ENCODE measurements at regions of chrX and their contacts with region 1.

Region 1: DNA sequence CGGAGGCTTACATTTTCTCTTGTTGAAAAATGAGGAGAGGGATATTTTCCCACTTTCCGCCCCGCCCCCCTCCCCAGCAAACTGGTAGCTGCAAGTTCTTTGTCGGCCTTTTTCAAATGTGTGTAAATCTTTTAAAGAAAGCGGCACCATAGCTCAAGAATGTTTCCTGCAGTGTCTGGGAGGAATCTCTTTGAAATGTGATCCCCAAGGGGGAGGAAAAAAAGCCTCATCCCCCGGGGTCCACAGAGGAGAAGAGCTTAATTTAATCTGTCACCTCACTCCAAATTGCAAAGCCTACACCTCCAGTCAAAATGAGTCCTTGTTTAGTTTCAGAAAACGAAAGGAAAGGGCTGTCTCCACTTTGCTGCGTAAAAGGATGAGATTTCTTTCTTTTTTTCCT is 34.8 kb downstream of the ASMT start:
- DNase-seq: no peak
- H3K4me3 ChIP-seq: no peak overlapping the region
- H3K27ac ChIP-seq: no peak overlapping the region
- H3K4me1 ChIP-seq: peaks cover 0 to 4% (median 2%) of the 10 kb centered on the region in 4 donors
- H3K27me3 ChIP-seq: peaks cover 0 to 21% (median 0%) of the 10 kb centered on the region in 3 donors
- CTCF ChIP-seq: no peak
- EP300 ChIP-seq: no peak
- POLR2A ChIP-seq: no peak

Region 2: DNA sequence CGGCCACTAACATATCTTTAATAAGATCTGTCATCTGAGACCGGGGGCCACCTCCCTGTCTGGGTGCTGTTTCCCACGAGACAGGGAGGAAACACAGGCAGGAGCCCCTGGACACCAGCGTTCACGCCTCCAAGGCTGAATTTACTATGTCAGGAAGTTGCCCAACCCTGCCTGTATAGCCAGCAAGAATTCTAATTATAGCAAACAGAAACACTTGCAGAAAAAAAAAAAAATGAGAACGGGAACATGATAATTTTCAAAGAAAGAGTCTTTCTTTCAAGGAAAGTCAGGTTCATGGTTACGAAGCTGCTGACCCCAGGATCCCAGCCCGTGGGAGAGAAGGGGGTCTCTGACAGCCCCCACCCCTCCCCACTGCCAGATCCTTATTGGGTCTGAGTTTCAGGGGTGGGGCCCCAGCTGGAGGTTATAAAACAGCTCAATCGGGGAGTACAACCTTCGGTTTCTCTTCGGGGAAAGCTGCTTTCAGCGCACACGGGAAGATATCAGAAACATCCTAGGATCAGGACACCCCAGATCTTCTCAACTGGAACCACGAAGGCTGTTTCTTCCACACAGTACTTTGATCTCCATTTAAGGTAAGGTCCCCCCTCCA is 313.2 kb before region 1 on chrX and contains the start of gene IL3RA:
- intact Hi-C with region 1: no loop called
- DNase-seq: peak in 1 of 2 donors; percentile 50
- H3K4me3 ChIP-seq: peak within 1 kb of the TSS; percentile 38 to 47 (median 42)
- H3K27ac ChIP-seq: peak within 1 kb of the TSS; percentile 46 to 73 (median 68)
- H3K4me1 ChIP-seq: peaks cover 0 to 13% (median 0%) of the 10 kb centered on the region in 4 donors
- H3K27me3 ChIP-seq: no peaks in the 10 kb centered on the region
- CTCF ChIP-seq: no peak
- EP300 ChIP-seq: no peak
- POLR2A ChIP-seq: no peak
- total RNA-seq, gene IL3RA: 2.4 to 10.1 (median 3.2) TPM in 4 of 5 donors, not detected in the other

Region 3: DNA sequence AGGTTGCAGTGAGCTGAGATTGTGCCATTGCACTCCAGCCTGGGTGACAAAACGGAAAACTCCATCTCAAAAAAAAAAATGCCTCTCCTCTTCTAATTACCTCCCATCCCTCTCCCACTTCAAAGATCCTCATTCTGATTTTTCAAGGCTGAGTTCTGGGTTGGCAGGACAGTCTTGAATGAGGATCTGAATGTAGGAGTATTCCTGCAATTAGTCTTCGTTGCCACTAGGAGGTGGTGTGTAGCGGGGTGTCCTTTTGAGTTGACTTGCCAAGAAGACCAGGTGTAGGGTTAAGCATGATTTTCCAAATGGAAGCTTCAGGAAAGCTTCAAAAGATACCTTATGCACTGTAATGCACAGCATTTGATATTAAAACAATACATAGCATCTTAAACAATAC is 135.2 kb after region 1 on chrX:
- intact Hi-C with region 1: no loop called
- DNase-seq: no peak
- H3K4me3 ChIP-seq: no peak overlapping the region
- H3K27ac ChIP-seq: no peak overlapping the region
- H3K4me1 ChIP-seq: no peaks in the 10 kb centered on the region
- H3K27me3 ChIP-seq: no peaks in the 10 kb centered on the region
- CTCF ChIP-seq: no peak
- EP300 ChIP-seq: no peak
- POLR2A ChIP-seq: no peak

Region 4: GRCh38 chrX:2589186-2590030 is 939.8 kb after region 1 on chrX:
- intact Hi-C with region 1: loop called (anchors 5 kb)
- DNase-seq: no peak
- H3K4me3 ChIP-seq: no peak overlapping the region
- H3K27ac ChIP-seq: no peak overlapping the region
- H3K4me1 ChIP-seq: peaks cover 0 to 19% (median 9%) of the 10 kb centered on the region in 4 donors
- H3K27me3 ChIP-seq: peaks cover 0 to 17% (median 12%) of the 10 kb centered on the region in 3 donors
- CTCF ChIP-seq: no peak
- EP300 ChIP-seq: no peak
- POLR2A ChIP-seq: no peak

Measured in stomach (tissue), 19 donors.